ENCODE measurements at regions of chr9 and their contacts with region 1.

Region 1: DNA sequence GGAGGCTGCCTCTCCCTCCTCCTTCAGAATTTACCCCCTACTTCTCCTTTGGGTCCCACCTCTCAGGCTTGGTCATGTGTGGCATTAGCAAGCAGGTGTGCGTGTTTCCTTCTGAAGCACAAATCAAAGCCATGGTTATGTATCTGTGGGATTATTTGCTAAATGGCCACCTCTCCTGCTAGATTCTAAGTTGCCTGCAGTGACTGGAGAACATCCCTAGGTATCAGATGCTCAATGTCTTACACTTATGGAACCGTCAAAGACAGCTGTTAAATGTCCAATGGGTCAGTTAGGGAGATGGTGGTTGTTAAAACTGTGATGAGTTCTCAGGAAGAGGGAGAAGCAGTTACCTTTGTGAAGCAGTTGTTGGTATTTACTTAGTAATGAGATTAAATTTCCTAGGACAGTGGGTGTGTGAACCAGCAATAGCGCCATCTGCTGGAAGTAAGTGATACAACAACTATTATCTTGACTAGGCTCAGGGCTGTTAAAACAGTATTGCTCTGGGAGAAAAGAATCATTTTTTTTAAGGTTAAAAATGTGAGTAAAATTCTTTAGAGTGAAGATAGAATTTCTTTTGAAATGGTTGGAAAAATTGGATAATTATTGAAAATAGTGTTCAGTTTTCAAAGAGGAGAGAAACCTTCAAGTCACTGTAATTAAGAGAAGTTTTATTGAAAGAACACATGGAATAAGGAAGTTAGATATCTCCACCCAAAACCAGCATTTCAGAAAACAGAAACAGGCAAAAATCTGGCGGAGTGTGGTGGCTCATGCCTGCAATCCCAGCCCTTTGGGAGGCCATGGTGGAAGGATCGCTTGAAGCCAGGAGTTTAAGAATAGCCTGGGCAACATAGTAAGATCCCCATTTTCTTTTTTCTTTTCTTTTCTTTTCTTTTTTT is 71.3 kb downstream of the TMC1 start:
- DNase-seq: peak in 1 of 2 donors; percentile 30
- ATAC-seq: peak; percentile 77 to 88 (median 80)
- H3K4me3 ChIP-seq: no peak overlapping the region
- H3K27ac ChIP-seq: peak overlapping the region in 3 of 10 donors; percentile 4 to 60 (median 57)
- H3K4me1 ChIP-seq: peaks cover 0 to 44% (median 5%) of the 10 kb centered on the region in 9 donors
- H3K27me3 ChIP-seq: no peaks in the 10 kb centered on the region
- CTCF ChIP-seq: peak; percentile 78 to 93 (median 88)

Region 2: GRCh38 chr9:72038890-72039410 is 553.8 kb before region 1 on chr9:
- intact Hi-C with region 1: loop called in 4 of 10 experiments (anchors 10 kb)
- DNase-seq: peak; percentile 60 to 76
- ATAC-seq: peak; percentile 62 to 90 (median 84)
- H3K4me3 ChIP-seq: no peak overlapping the region
- H3K27ac ChIP-seq: no peak overlapping the region
- H3K4me1 ChIP-seq: peaks cover 0 to 11% (median 0%) of the 10 kb centered on the region in 9 donors
- H3K27me3 ChIP-seq: no peaks in the 10 kb centered on the region
- CTCF ChIP-seq: peak; percentile 95 to 99 (median 97)

Region 3: DNA sequence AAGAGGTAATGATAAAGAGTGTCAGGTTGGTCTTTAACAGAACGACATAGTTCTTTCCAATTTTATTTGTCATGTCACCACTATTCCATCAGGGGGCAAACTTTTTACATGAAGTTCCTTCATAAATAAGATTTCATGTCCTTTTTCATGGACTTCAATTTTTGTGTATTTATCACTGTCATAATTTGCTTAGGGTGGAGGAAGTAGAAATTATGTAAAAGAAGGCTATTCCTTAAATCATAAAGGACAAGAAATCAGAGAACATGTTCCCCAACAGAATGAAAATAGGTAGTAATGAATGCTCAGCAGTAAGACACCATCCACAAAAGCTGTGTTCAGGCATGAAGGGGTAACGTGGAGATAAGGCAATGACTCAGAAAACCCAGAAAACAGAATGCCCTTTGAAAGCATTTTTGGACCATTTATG is 300.5 kb before region 1 on chr9:
- intact Hi-C with region 1: loop called (anchors 1 to 5 kb)
- DNase-seq: no peak
- ATAC-seq: peak in 3 of 8 donors; percentile 30 to 51 (median 44)
- H3K4me3 ChIP-seq: no peak overlapping the region
- H3K27ac ChIP-seq: peak overlapping the region in 1 of 10 donors; percentile 68
- H3K4me1 ChIP-seq: peaks cover 0 to 33% (median 8%) of the 10 kb centered on the region in 9 donors
- H3K27me3 ChIP-seq: no peaks in the 10 kb centered on the region
- CTCF ChIP-seq: peak; percentile 44 to 79 (median 65)

Region 4: GRCh38 chr9:72464857-72465592 is 127.7 kb before region 1 on chr9:
- intact Hi-C with region 1: loop called in 1 of 10 experiments (anchors 10 kb)
- DNase-seq: no peak
- ATAC-seq: peak in 7 of 8 donors; percentile 33 to 76 (median 65)
- H3K4me3 ChIP-seq: peak overlapping the region in 3 of 10 donors; percentile 17 to 28 (median 27)
- H3K27ac ChIP-seq: peak overlapping the region in 4 of 10 donors; percentile 30 to 43 (median 40)
- H3K4me1 ChIP-seq: peaks cover 0 to 13% (median 0%) of the 10 kb centered on the region in 9 donors
- H3K27me3 ChIP-seq: no peaks in the 10 kb centered on the region
- CTCF ChIP-seq: no peak

Region 5: GRCh38 chr9:72827950-72828731 is 235.4 kb after region 1 on chr9:
- intact Hi-C with region 1: loop called in 3 of 10 experiments (anchors 5 to 10 kb)
- DNase-seq: no peak
- ATAC-seq: peak in 1 of 8 donors; percentile 25
- H3K4me3 ChIP-seq: no peak overlapping the region
- H3K27ac ChIP-seq: peak overlapping the region in 6 of 10 donors; percentile 8 to 70 (median 46)
- H3K4me1 ChIP-seq: peaks cover 0 to 17% (median 0%) of the 10 kb centered on the region in 9 donors
- H3K27me3 ChIP-seq: no peaks in the 10 kb centered on the region
- CTCF ChIP-seq: no peak

Measured in heart right ventricle (tissue), 16 donors.